Testis (tissue), 5 donors: ENCODE measurements at regions of chr19 and their contacts with region 1.

Region 1: GRCh38 chr19:19145684-19146608 is 7.7 kb upstream of the TMEM161A start:
- DNase-seq: peak; percentile 82
- H3K4me3 ChIP-seq: peak overlapping the region; percentile 12 to 41
- H3K27ac ChIP-seq: no peak overlapping the region
- H3K4me1 ChIP-seq: no peaks in the 10 kb centered on the region
- H3K27me3 ChIP-seq: no peaks in the 10 kb centered on the region
- CTCF ChIP-seq: peak; percentile 90 to 100 (median 96)
- POLR2A ChIP-seq: no peak

Region 2: GRCh38 chr19:19026299-19026971 is 119.5 kb before region 1 on chr19:
- intact Hi-C with region 1: no loop called
- DNase-seq: peak; percentile 49
- H3K4me3 ChIP-seq: no peak overlapping the region
- H3K27ac ChIP-seq: no peak overlapping the region
- H3K4me1 ChIP-seq: no peaks in the 10 kb centered on the region
- H3K27me3 ChIP-seq: no peaks in the 10 kb centered on the region
- CTCF ChIP-seq: no peak
- POLR2A ChIP-seq: no peak

Region 3: GRCh38 chr19:19063183-19064097 is 82.5 kb before region 1 on chr19 and contains the start of gene SLC25A42:
- intact Hi-C with region 1: loop called (anchors 10 kb)
- DNase-seq: peak; percentile 99
- H3K4me3 ChIP-seq: peak within 1 kb of the TSS; percentile 68 to 75
- H3K27ac ChIP-seq: peak within 1 kb of the TSS; percentile 35 to 76
- H3K4me1 ChIP-seq: peaks cover 24% of the 10 kb centered on the region
- H3K27me3 ChIP-seq: no peaks in the 10 kb centered on the region
- CTCF ChIP-seq: no peak
- POLR2A ChIP-seq: no peak
- total RNA-seq, gene SLC25A42: 14.3 to 14.7 TPM